ENCODE measurements at regions of chr1 and their contacts with region 1.

Region 1: DNA sequence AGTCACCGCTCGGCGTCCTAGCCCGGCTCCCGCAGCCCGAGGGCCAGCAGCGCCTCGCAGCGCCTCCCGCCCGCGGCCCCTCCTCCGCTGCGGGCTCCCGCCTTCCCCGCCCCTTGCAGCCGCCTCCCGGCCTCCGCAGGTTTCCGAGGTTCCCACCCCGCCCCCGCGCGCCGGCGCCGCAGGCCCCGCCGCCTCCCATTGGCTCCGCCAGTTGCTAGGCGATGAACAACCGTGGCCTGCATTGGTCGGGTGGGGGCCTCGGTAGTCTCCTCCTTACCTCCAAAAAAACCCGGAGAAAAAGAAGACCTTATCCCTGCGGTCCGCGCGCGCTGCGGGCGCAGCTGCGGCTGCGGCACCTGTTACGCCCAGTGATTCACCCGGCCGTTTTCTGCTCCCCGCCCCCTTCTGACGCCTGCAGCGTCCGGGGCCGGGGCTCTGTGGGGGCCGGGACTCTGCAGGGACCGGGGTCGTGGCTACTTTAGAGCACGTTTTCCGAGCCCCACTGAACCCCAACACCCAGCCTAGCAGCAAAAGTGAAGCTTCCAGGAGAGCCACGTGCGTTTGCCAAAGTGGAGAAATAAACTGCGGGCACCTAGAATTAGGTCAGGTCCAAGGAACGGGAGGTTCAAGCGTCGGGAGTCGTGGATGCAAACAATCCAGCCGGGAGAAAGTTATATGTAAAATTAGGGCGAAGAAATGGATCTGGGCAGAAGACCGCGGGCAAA is at the start of gene SSX2IP:
- DNase-seq: peak; percentile 99
- ATAC-seq: peak; percentile 87
- H3K4me3 ChIP-seq: peak within 1 kb of the TSS; percentile 75
- H3K27ac ChIP-seq: peak within 1 kb of the TSS; percentile 50
- H3K4me1 ChIP-seq: peaks cover 31% of the 10 kb centered on the region
- H3K27me3 ChIP-seq: no peaks in the 10 kb centered on the region
- CTCF ChIP-seq: no peak
- total RNA-seq, gene SSX2IP: 22.8 and 28.0 TPM in 2 replicates

Region 2: DNA sequence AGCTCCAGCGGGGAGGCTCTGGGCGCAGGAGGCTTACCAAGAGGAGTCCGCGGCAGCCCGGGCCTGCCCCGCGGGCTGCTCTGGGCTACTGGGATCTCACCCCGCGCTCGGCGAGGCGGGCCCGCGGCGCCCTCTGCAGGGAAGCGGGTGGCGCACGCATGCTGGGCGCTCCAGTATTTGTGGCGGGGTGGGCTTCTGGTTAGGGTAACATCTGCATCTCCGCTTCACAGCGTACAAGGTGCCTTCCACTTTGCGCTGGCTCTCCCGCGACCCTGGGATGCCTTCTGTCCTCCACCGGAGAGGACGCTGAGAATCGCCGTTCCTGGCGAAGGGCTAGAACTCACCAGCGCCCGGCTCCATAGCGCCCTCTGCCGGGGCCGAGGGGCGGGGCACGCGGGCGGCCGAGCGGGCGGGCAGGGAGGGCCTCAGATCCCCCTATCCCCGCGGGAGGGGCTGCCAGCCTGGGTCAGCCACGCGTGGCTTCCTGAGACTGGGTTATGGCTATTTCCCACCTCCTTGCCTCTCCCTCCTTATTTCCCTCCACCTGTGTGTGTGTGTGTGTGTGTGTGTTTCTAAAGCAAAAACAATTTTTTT is 69.7 kb before region 1 on chr1:
- CTCF ChIA-PET with region 1: no interaction called
- POLR2A ChIA-PET with region 1: no interaction called
- intact Hi-C with region 1: loop called (anchors 5 kb)
- DNase-seq: peak; percentile 84
- ATAC-seq: peak; percentile 83
- H3K4me3 ChIP-seq: peak overlapping the region; percentile 81
- H3K27ac ChIP-seq: peak overlapping the region; percentile 84
- H3K4me1 ChIP-seq: peaks cover 24% of the 10 kb centered on the region
- H3K27me3 ChIP-seq: no peaks in the 10 kb centered on the region
- CTCF ChIP-seq: peak; percentile 98

Region 3: DNA sequence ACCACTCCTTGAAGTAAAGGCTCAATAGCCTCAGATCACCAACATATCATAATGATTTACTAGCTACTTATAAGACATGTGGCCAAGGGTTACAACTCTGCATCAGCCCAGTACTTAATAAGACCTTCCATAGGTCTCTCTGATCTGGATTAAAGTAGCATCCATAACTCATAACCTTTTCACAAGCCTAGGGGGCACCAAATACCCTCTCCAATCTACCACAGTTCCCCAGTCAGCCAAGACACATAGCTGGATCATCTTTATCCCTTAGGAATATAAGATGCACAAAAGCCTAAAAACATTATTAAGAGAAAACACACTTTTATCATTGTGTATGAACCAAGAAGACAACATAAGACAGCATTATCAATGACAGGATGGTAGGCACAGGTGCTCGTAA is 22.4 kb before region 1 on chr1:
- CTCF ChIA-PET with region 1: no interaction called
- POLR2A ChIA-PET with region 1: no interaction called
- intact Hi-C with region 1: no loop called
- DNase-seq: peak; percentile 28
- ATAC-seq: peak; percentile 66; the same call in 1 of the 2 replicates
- H3K4me3 ChIP-seq: no peak overlapping the region
- H3K27ac ChIP-seq: no peak overlapping the region
- H3K4me1 ChIP-seq: 0 out of 2 replicates have a peak, but pooled peaks cover 6% of the 10 kb centered on the region
- H3K27me3 ChIP-seq: no peaks in the 10 kb centered on the region
- CTCF ChIP-seq: peak; percentile 62

Region 4: GRCh38 chr1:84726593-84727499 is 36.3 kb after region 1 on chr1:
- CTCF ChIA-PET with region 1: no interaction called
- POLR2A ChIA-PET with region 1: no interaction called
- intact Hi-C with region 1: loop called (anchors 5 kb)
- DNase-seq: peak; percentile 50
- ATAC-seq: peak; percentile 74
- H3K4me3 ChIP-seq: no peak overlapping the region
- H3K27ac ChIP-seq: no peak overlapping the region
- H3K4me1 ChIP-seq: peaks cover 15% of the 10 kb centered on the region
- H3K27me3 ChIP-seq: no peaks in the 10 kb centered on the region
- CTCF ChIP-seq: no peak

Measured in PC-3 (cell line).